MCF 10A (cell line): ENCODE measurements at regions of chr18 and their contacts with region 1.

Region 1: DNA sequence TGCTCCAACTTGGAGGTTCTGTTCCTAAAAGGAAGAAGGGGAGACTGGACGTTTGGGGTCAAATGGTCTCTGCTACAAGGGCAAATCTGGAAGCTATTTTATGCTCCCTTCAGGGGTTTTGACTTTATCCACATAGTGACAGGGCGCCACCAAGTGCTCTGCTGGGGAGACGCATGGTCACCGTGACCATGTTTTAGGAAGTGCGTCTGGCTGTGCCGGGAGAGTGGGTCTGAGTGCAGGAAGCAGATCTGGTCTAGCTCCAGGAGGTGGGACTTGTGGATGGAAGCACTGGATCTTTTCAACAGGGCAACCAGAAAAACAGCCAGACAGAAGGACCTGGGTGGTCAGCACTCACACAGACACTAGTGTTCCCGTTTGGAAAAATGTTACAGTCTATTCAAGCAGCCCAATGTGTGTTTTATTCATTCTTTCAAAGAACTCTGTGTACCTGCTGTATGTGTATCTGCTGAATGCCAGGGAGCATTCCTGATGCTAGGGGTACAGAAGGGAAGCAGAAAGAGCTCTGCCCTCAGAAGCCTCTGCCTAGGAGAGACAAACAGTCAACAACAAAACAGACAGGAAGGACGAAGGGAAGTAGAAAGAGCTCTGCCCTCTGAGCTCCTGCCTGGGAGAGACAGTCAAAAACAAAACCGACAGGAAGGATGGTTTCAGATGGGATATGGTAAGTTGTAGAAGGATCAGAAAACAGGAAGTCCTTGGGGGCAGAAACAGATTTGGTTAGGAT is 14.3 kb downstream of the IMPA2 start:
- DNase-seq: peak; percentile 76
- H3K4me3 Mint-ChIP-seq: no peak overlapping the region
- H3K27ac Mint-ChIP-seq: peak overlapping the region; percentile 97
- H3K4me1 Mint-ChIP-seq: peaks cover 29% of the 10 kb centered on the region
- H3K27me3 Mint-ChIP-seq: no peaks in the 10 kb centered on the region
- CTCF ChIP-seq: peak; percentile 88

Region 2: GRCh38 chr18:11654736-11655605 is 340.6 kb before region 1 on chr18:
- CTCF ChIA-PET with region 1: interaction called, 42 read pairs
- POLR2A ChIA-PET with region 1: interaction called, 7 read pairs
- intact Hi-C with region 1: no loop called
- DNase-seq: peak; percentile 67
- H3K4me3 Mint-ChIP-seq: peak overlapping the region; percentile 24
- H3K27ac Mint-ChIP-seq: no peak overlapping the region
- H3K4me1 Mint-ChIP-seq: peaks cover 27% of the 10 kb centered on the region
- H3K27me3 Mint-ChIP-seq: no peaks in the 10 kb centered on the region
- CTCF ChIP-seq: peak; percentile 88

Region 3: DNA sequence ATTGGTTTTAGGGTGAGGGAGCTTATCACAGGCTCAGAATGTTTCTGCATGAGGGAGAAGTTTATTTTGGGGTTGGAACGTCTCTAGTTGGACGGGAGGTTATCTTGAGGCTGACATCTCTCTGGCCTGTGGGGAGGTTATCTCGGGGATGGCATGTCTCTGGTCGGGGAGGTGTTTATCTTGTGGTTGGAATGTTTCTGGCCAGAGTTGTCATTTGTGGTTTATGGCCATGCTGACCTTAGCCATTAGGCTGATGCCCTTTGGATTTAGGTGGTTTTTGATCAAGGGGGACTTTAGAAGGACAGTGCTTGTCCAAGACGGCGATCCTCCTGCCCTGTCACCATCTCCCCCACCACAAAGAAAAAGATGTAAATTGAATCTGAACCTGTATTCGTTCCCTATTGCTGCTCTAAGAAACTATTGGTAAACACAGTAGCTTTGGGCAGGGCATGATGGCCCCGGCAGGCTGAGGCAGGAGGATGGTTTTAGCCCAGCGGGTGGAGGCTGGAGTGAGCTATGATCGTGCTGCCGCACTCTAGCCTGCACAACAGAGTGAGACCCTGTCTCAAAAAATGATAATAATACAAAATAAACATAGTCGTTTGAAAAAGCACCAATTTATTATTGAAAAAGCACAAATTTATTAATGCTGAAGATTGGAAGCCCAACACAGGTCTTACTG is 69.7 kb before region 1 on chr18:
- CTCF ChIA-PET with region 1: interaction called, 15 read pairs
- POLR2A ChIA-PET with region 1: no interaction called
- intact Hi-C with region 1: no loop called
- DNase-seq: no peak
- H3K4me3 Mint-ChIP-seq: no peak overlapping the region
- H3K27ac Mint-ChIP-seq: no peak overlapping the region
- H3K4me1 Mint-ChIP-seq: no peaks in the 10 kb centered on the region
- H3K27me3 Mint-ChIP-seq: no peaks in the 10 kb centered on the region
- CTCF ChIP-seq: no peak

Region 4: DNA sequence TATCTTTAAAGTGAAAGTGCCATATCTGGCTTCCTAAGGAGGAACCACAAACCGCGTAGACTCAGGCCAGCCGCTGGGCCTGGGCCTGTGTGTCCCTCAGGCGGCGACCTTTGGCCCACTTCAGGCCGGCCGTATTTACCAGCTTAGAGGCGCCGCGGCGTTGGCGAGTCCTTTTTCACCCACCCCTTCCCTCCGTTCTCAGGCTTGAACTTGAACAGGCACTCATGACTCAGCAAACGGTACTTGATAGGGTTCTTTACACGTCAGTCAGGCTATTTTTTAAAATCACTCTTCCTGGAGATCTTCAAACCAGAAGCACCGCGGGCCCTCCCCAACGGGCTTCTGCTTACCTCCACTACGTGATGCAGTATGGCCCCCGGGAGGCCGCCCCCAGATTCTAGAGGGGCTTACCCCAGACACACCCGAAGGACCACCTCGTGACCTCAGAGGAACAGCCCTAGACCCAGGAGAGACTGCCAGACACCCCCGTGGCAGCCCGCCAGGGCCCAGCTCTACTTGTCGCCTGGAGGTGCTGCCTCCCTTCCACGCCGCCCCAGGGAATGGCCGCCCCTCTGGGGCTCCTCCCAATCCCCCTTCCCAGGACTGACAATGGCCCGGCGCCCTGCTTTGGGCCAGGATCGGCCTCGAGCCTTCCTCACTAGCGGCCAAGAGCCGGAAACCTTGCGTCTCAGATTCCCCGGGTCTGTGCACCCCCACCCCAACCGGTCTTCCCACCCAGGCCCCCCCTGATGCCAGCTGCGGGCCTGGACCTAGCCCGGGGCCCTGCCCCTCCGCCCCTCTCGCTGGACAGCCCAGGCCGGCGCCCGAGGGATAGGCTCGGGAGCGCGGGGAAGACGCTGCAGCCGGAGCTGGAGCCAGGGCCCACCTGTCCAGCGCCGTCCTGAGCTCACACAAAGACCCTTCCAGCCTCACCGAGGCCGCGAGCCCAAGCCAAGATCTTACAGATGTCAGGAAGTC is 48.1 kb before region 1 on chr18:
- CTCF ChIA-PET with region 1: interaction called, 458 read pairs
- POLR2A ChIA-PET with region 1: interaction called, 9 read pairs
- intact Hi-C with region 1: no loop called
- DNase-seq: peak; percentile 98
- H3K4me3 Mint-ChIP-seq: peak overlapping the region; percentile 66
- H3K27ac Mint-ChIP-seq: peak overlapping the region; percentile 95
- H3K4me1 Mint-ChIP-seq: peaks cover 30% of the 10 kb centered on the region
- H3K27me3 Mint-ChIP-seq: no peaks in the 10 kb centered on the region
- CTCF ChIP-seq: no peak

Region 5: GRCh38 chr18:12005538-12006487 is 10.2 kb after region 1 on chr18:
- CTCF ChIA-PET with region 1: interaction called, 34 read pairs
- POLR2A ChIA-PET with region 1: interaction called, 19 read pairs
- intact Hi-C with region 1: no loop called
- DNase-seq: peak; percentile 49
- H3K4me3 Mint-ChIP-seq: no peak overlapping the region
- H3K27ac Mint-ChIP-seq: peak overlapping the region; percentile 43
- H3K4me1 Mint-ChIP-seq: no peaks in the 10 kb centered on the region
- H3K27me3 Mint-ChIP-seq: no peaks in the 10 kb centered on the region
- CTCF ChIP-seq: no peak

Region 6: GRCh38 chr18:12038639-12039417 is 43.2 kb after region 1 on chr18:
- CTCF ChIA-PET with region 1: interaction called, 23 read pairs
- POLR2A ChIA-PET with region 1: interaction called, 8 read pairs
- intact Hi-C with region 1: loop called (anchors 5 kb)
- DNase-seq: peak; percentile 70
- H3K4me3 Mint-ChIP-seq: peak overlapping the region; percentile 71
- H3K27ac Mint-ChIP-seq: no peak overlapping the region
- H3K4me1 Mint-ChIP-seq: peaks cover 16% of the 10 kb centered on the region
- H3K27me3 Mint-ChIP-seq: no peaks in the 10 kb centered on the region
- CTCF ChIP-seq: peak; percentile 98